Ovary (tissue), 10 donors: ENCODE measurements at regions of chrX and their contacts with region 1.

Region 1: DNA sequence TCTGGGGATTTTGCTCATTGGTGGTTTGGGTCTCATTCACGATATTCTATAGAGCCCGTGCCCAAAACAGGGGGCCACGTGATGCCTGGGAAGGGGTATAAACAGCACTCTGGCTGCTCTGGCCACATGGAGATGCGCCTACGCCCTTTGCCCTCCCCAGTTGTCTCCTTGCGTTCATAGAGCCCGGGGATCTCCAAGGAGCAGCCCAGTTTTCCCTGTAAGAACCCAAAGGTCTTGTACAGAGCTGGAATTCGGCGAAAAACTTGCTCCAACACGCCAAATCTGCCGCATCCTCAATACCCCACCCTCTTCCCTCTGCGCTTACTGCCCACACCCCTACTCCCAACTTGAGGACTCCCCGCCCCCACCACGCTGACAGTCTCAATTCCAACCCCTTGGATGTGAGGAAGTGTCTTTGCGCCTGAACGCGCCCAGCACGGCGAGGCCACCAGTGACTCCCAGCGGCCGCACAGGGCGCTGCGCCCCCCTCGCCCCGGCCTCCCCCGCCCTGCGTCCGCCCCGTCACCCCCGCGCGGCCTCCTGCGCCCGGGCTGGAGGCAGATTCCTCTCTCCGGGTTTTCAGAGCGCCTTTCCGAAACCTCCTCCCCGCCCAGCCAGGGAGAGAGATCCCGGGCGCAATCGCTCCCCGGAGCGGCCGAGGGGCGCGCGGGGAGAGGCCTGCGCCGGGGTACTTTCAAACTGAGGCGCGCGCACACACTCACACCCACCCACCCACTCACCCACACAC is at the start of gene NHS:
- DNase-seq: peak; percentile 73 to 85 (median 78)
- H3K4me3 ChIP-seq: peak within 1 kb of the TSS; percentile 58
- H3K27ac ChIP-seq: peak within 1 kb of the TSS; percentile 61 to 70
- H3K4me1 ChIP-seq: no peaks in the 10 kb centered on the region
- H3K27me3 ChIP-seq: no peaks in the 10 kb centered on the region
- CTCF ChIP-seq: peak; percentile 27 to 41 (median 33)
- EP300 ChIP-seq: no peak
- POLR2A ChIP-seq: peak; percentile 17
- total RNA-seq, gene NHS: 3.2 to 9.5 (median 7.0) TPM

Region 2: GRCh38 chrX:16870095-16870860 is 504.5 kb before region 1 on chrX and contains the start of gene RBBP7:
- intact Hi-C with region 1: loop called in 1 of 4 experiments (anchors 10 kb)
- DNase-seq: peak; percentile 96 to 98 (median 97)
- H3K4me3 ChIP-seq: peak within 1 kb of the TSS; percentile 73
- H3K27ac ChIP-seq: peak within 1 kb of the TSS; percentile 79 to 94
- H3K4me1 ChIP-seq: peaks cover 10% of the 10 kb centered on the region
- H3K27me3 ChIP-seq: no peaks in the 10 kb centered on the region
- CTCF ChIP-seq: peak in 1 of 3 donors; percentile 19
- EP300 ChIP-seq: no peak
- POLR2A ChIP-seq: peak; percentile 90
- total RNA-seq, gene RBBP7: 101 to 258 (median 188) TPM

Region 3: GRCh38 chrX:16882702-16883486 is 491.9 kb before region 1 on chrX:
- intact Hi-C with region 1: loop called in 2 of 4 experiments (anchors 10 kb)
- DNase-seq: peak; percentile 60 to 79 (median 78)
- H3K4me3 ChIP-seq: peak overlapping the region; percentile 34
- H3K27ac ChIP-seq: peak overlapping the region; percentile 16 to 55
- H3K4me1 ChIP-seq: no peaks in the 10 kb centered on the region
- H3K27me3 ChIP-seq: no peaks in the 10 kb centered on the region
- CTCF ChIP-seq: peak; percentile 41 to 54 (median 49)
- EP300 ChIP-seq: no peak
- POLR2A ChIP-seq: no peak

Region 4: GRCh38 chrX:17242470-17242869 is 132.3 kb before region 1 on chrX:
- intact Hi-C with region 1: loop called in 2 of 4 experiments (anchors 10 kb)
- DNase-seq: peak in 2 of 5 donors; percentile 32 to 55
- H3K4me3 ChIP-seq: no peak overlapping the region
- H3K27ac ChIP-seq: no peak overlapping the region
- H3K4me1 ChIP-seq: no peaks in the 10 kb centered on the region
- H3K27me3 ChIP-seq: no peaks in the 10 kb centered on the region
- CTCF ChIP-seq: peak; percentile 26 to 73 (median 66)
- EP300 ChIP-seq: no peak
- POLR2A ChIP-seq: no peak

Region 5: DNA sequence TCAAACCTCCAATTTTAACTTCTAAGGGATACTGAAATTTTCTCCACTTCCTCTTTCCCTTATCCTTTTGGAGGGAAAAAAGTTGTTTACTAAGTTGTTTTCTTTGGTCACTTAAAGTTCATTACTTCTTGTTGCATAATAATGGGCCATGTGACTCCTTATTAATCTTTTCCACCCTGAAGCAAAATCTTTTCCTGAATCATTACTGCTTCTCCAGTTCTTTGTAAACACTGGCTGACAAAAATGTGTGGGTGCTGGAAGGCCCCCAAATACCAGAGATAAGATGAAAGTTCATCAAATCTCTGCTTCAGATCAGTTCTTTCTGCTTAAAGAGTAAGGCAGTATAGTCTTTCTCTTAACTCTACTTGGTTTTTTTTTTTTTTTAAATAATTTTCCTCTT is 108.7 kb before region 1 on chrX:
- intact Hi-C with region 1: no loop called
- DNase-seq: no peak
- H3K4me3 ChIP-seq: no peak overlapping the region
- H3K27ac ChIP-seq: no peak overlapping the region
- H3K4me1 ChIP-seq: no peaks in the 10 kb centered on the region
- H3K27me3 ChIP-seq: no peaks in the 10 kb centered on the region
- CTCF ChIP-seq: no peak
- EP300 ChIP-seq: no peak
- POLR2A ChIP-seq: no peak

Region 6: GRCh38 chrX:17519358-17519757 is 144.6 kb after region 1 on chrX:
- intact Hi-C with region 1: loop called in 1 of 4 experiments (anchors 5 kb)
- DNase-seq: peak; percentile 47 to 78 (median 67)
- H3K4me3 ChIP-seq: no peak overlapping the region
- H3K27ac ChIP-seq: no peak overlapping the region
- H3K4me1 ChIP-seq: peaks cover 2% of the 10 kb centered on the region
- H3K27me3 ChIP-seq: no peaks in the 10 kb centered on the region
- CTCF ChIP-seq: no peak
- EP300 ChIP-seq: no peak
- POLR2A ChIP-seq: no peak

Region 7: GRCh38 chrX:17590892-17591740 is 216.3 kb after region 1 on chrX:
- intact Hi-C with region 1: loop called in 2 of 4 experiments (anchors 2 to 10 kb)
- DNase-seq: peak; percentile 49 to 73 (median 60)
- H3K4me3 ChIP-seq: no peak overlapping the region
- H3K27ac ChIP-seq: peak overlapping the region in 1 of 2 donors; percentile 1
- H3K4me1 ChIP-seq: peaks cover 3% of the 10 kb centered on the region
- H3K27me3 ChIP-seq: no peaks in the 10 kb centered on the region
- CTCF ChIP-seq: peak; percentile 29 to 65 (median 56)
- EP300 ChIP-seq: no peak
- POLR2A ChIP-seq: no peak

Region 8: DNA sequence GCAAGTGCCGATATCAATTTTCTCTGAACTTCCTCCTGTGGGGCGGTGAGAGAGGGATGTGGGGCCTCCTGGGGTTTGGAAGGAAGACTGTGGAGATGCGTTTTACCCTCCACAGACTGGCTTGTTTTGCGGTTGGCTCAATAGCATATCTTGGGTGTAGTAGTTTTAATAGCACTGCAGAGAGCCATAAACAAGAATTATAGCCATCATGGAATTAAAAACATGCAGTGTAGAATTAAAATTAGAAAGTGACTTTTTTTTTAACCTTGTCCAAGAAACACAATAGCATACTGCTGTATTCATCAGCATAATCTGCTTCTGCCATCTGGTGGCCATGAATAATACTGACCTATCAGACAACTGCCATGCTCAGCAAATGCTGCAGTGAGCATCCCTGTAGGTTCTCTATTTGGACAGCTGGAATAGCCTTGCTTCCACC is 315.2 kb after region 1 on chrX:
- intact Hi-C with region 1: loop called in 2 of 4 experiments (anchors 10 kb)
- DNase-seq: peak; percentile 23 to 71 (median 48)
- H3K4me3 ChIP-seq: no peak overlapping the region
- H3K27ac ChIP-seq: no peak overlapping the region
- H3K4me1 ChIP-seq: no peaks in the 10 kb centered on the region
- H3K27me3 ChIP-seq: no peaks in the 10 kb centered on the region
- CTCF ChIP-seq: peak in 2 of 3 donors; percentile 68 to 71
- EP300 ChIP-seq: no peak
- POLR2A ChIP-seq: no peak